ENCODE measurements at regions of chr6 and their contacts with region 1.

Region 1: GRCh38 chr6:146028293-146028691 is 570 bp upstream of the GRM1 start:
- DNase-seq: peak; percentile 89
- ATAC-seq: peak; percentile 87
- H3K4me3 Mint-ChIP-seq: peak overlapping the region; percentile 80
- H3K27ac Mint-ChIP-seq: no peak overlapping the region
- H3K4me1 Mint-ChIP-seq: peaks cover 20% of the 10 kb centered on the region
- H3K27me3 Mint-ChIP-seq: peaks cover 55% of the 10 kb centered on the region
- CTCF ChIP-seq: no peak

Region 2: DNA sequence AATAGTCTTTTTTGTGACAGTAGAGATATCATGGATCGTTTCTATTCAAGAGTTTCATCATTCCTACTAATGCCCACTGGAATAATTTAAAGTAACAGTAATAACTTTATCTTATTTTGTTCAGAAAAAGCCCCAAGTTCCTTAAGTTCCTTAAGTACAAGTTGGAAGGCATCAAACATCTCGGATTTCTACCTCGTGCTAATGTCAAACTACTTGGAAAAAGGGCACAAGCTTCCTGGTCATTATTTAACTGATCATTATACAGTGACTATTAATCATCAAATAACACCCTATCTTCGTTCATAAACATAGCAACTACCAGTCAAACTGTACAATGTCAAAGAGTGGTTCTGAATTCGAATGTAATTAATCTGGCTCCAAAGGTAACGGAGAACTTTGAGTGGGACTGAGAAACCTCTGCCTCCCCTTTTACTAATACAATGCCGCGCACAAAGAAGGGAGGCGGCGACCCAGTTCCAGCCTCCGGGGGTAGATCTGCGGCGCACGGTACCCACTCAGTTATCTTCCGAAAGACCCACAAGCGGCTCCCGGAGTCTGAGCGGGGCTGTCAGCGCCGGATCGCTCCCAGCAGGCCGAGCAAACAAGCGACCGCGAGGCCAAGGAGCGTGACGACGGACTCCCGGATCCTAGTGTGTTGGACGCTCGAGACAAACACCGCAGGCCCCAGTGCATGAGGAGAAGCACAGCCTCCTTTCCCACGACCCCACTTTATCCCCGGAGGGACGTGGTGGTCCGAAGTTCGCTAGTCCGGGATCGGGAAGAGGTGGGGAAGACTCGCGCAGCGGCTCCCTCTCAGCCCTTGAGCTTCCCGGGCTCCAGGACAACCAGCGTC is 64.8 kb before region 1 on chr6:
- CTCF ChIA-PET with region 1: interaction called, 14 read pairs
- POLR2A ChIA-PET with region 1: interaction called, 3 read pairs
- DNase-seq: peak; percentile 51
- ATAC-seq: peak; percentile 11
- H3K4me3 Mint-ChIP-seq: peak overlapping the region; percentile 86
- H3K27ac Mint-ChIP-seq: peak overlapping the region; percentile 50; the same call in 1 of the 2 replicates
- H3K4me1 Mint-ChIP-seq: peaks cover 29% of the 10 kb centered on the region
- H3K27me3 Mint-ChIP-seq: peaks cover 5% of the 10 kb centered on the region; the same call in 1 of the 2 replicates
- CTCF ChIP-seq: no peak

Region 3: GRCh38 chr6:146041282-146041681 is 13.0 kb after region 1 on chr6:
- CTCF ChIA-PET with region 1: interaction called, 10 read pairs
- POLR2A ChIA-PET with region 1: interaction called, 3 read pairs
- DNase-seq: peak; percentile 62
- ATAC-seq: peak; percentile 100
- H3K4me3 Mint-ChIP-seq: no peak overlapping the region
- H3K27ac Mint-ChIP-seq: no peak overlapping the region
- H3K4me1 Mint-ChIP-seq: peaks cover 4% of the 10 kb centered on the region; the same call in 1 of the 2 replicates
- H3K27me3 Mint-ChIP-seq: no peaks in the 10 kb centered on the region; the same call in 1 of the 2 replicates
- CTCF ChIP-seq: peak; percentile 17; the same call in 1 of the 2 replicates

Region 4: GRCh38 chr6:146077992-146078391 is 49.7 kb after region 1 on chr6:
- CTCF ChIA-PET with region 1: no interaction called
- POLR2A ChIA-PET with region 1: no interaction called
- DNase-seq: no peak
- ATAC-seq: no peak
- H3K4me3 Mint-ChIP-seq: no peak overlapping the region
- H3K27ac Mint-ChIP-seq: no peak overlapping the region
- H3K4me1 Mint-ChIP-seq: peaks cover 2% of the 10 kb centered on the region
- H3K27me3 Mint-ChIP-seq: no peaks in the 10 kb centered on the region
- CTCF ChIP-seq: no peak

Measured in WTC11 (cell line).